Breast epithelium (tissue), 4 donors: ENCODE measurements at regions of chr20 and their contacts with region 1.

Region 1: GRCh38 chr20:11363506-11363905 is 554.2 kb upstream of the BTBD3 start:
- DNase-seq: no peak
- H3K4me3 ChIP-seq: no peak overlapping the region
- H3K27ac ChIP-seq: no peak overlapping the region
- H3K4me1 ChIP-seq: no peaks in the 10 kb centered on the region
- H3K27me3 ChIP-seq: no peaks in the 10 kb centered on the region
- CTCF ChIP-seq: no peak
- POLR2A ChIP-seq: no peak

Region 2: DNA sequence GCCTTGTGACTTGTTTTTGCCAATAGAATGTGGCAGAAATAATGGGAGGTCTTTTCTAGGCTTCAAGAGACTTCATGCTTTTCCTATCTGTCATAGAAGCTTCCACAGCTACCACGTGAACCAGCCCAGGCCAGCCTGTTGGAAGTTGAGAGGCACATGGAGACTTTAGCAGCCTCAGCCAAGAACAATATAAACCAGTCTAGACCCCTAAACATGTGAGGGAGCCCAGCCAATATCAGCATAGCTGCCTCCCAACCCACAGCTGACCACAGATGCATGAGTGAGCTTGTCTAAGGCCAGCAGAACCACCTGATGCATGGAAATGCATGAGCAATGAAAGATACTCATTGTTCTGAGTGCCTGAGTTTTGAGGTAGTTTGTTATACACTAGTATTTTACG is 13.5 kb after region 1 on chr20:
- intact Hi-C with region 1: loop called (anchors 2 kb)
- DNase-seq: no peak
- H3K4me3 ChIP-seq: no peak overlapping the region
- H3K27ac ChIP-seq: no peak overlapping the region
- H3K4me1 ChIP-seq: no peaks in the 10 kb centered on the region
- H3K27me3 ChIP-seq: no peaks in the 10 kb centered on the region
- CTCF ChIP-seq: no peak
- POLR2A ChIP-seq: no peak